ENCODE measurements at regions of chr2 and their contacts with region 1.

Region 1: GRCh38 chr2:72887754-72888437 is 688 bp downstream of the SPR start:
- DNase-seq: peak; percentile 32
- H3K4me3 Mint-ChIP-seq: peak overlapping the region; percentile 81
- H3K27ac Mint-ChIP-seq: no peak overlapping the region
- H3K4me1 Mint-ChIP-seq: no peaks in the 10 kb centered on the region
- H3K27me3 Mint-ChIP-seq: peaks cover 44% of the 10 kb centered on the region

Region 2: DNA sequence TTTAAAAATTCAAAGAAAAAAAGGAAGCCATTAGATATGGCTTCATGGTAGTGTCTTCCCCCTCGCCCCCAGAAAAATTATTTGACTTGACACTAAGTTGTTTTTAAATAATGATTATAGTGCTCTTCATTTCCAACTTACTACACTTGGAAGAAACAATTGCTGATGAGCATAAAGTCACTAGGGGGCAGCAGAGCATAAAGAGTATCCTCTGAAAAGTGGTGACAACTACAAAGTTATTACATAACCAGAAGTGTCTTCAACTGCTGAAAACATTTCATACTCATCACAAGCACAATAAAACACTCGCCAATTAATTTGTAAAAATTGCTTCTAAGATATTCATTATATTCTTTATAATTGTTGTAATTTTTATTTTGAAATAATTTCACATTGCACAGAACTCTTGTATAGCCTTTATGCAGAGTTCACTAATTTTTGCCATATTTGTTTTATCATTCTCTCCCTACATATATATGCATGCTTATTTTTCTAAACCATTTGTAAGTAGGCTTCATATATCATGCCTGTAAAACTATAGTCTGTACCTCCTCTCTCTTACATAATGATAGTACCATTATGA is 116.9 kb before region 1 on chr2:
- intact Hi-C with region 1: loop called (anchors 1 kb)
- DNase-seq: peak; percentile 45
- H3K4me3 Mint-ChIP-seq: no peak overlapping the region
- H3K27ac Mint-ChIP-seq: no peak overlapping the region
- H3K4me1 Mint-ChIP-seq: no peaks in the 10 kb centered on the region
- H3K27me3 Mint-ChIP-seq: no peaks in the 10 kb centered on the region

Region 3: GRCh38 chr2:72915907-72916742 is 28.2 kb after region 1 on chr2:
- intact Hi-C with region 1: loop called (anchors 2 kb)
- DNase-seq: no peak
- H3K4me3 Mint-ChIP-seq: no peak overlapping the region
- H3K27ac Mint-ChIP-seq: no peak overlapping the region
- H3K4me1 Mint-ChIP-seq: peaks cover 18% of the 10 kb centered on the region
- H3K27me3 Mint-ChIP-seq: peaks cover 68% of the 10 kb centered on the region

Region 4: GRCh38 chr2:73163483-73164367 is 275.8 kb after region 1 on chr2:
- intact Hi-C with region 1: loop called (anchors 1 kb)
- DNase-seq: peak; percentile 37
- H3K4me3 Mint-ChIP-seq: no peak overlapping the region
- H3K27ac Mint-ChIP-seq: no peak overlapping the region
- H3K4me1 Mint-ChIP-seq: no peaks in the 10 kb centered on the region
- H3K27me3 Mint-ChIP-seq: peaks cover 9% of the 10 kb centered on the region

Region 5: DNA sequence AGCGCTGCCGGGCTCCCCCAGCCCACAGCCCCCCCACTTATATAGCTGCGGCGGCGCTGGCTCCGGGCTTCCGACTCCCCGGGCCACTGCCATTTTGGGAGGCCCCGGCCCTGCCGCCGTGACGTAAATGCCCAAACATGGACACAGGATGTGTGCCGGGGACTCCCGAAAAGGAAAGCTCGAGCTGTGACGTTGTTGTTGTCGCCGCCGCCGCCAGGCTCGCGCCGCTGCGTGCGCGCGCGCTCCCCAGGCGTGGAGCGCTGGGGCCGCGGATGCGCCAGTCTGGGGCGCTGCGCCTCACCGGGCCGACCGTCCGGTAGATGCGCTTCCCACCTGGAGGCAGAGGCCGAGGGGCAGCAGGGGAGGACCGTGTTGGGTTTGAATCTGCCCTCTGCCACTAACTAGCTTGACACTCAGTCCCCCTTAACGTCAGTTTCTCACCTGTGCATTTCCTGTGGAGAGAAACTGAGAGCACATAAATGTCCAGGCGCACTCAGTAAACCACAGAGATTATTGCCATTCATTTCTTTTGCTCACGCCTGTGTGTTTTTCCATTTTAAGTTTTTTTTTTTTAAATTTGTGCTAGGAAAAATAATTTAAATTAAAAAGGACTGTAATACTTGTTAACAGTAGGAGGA is 405.8 kb after region 1 on chr2 and contains the start of gene EGR4:
- intact Hi-C with region 1: loop called (anchors 5 kb)
- DNase-seq: peak; percentile 91
- H3K4me3 Mint-ChIP-seq: peak within 1 kb of the TSS; percentile 75
- H3K27ac Mint-ChIP-seq: peak within 1 kb of the TSS; percentile 63
- H3K4me1 Mint-ChIP-seq: peaks cover 14% of the 10 kb centered on the region
- H3K27me3 Mint-ChIP-seq: peaks cover 72% of the 10 kb centered on the region
- total RNA-seq, gene EGR4: 1.9 TPM in 2 replicates

Measured in activated T-helper 1 cell treated with anti-CD3 and anti-CD28 coated beads, Interleukin-12 subunit alpha, Interleukin-12 subunit beta, Interleukin-2, Interleukin-4 antibody, amounts not matched to agents 30 ng/mL and 10 ng/mL and 1 ng/mL, durations not matched to agents 14 hours and 24 hours and 36 hours (primary cell).